Dendritic cell treated with granulocyte-macrophage colony-stimulating factor and Interleukin-4, amounts not matched to agents 40 ng/mL and 50 ng/mL, for 4 days (primary cell): ENCODE measurements at regions of chr12 and their contacts with region 1.

Region 1: GRCh38 chr12:49866859-49867579 is 24.1 kb upstream of the BCDIN3D start:
- H3K4me3 Mint-ChIP-seq: no peak overlapping the region
- H3K27ac Mint-ChIP-seq: no peak overlapping the region
- H3K4me1 Mint-ChIP-seq: no peaks in the 10 kb centered on the region
- H3K27me3 Mint-ChIP-seq: peaks cover 39% of the 10 kb centered on the region

Region 2: DNA sequence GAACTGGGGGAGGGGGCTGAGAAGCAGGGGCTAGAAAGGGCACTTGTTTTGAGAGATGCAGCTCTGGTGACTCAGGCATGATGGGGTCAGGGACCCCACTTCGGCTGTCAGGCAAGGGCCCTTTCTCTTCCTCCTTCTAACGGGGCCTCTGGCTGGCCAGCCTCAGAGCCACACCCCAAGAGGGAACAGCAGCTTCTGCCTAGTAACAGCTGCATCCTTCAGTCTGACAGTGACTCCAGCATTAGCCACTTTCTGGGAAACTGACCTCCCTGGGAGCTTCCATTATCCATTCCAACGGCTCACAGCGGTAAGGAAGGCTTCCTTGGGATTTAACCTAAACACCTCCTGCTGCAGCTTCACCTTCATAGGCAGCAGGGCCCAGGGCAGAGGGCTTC is 41.7 kb before region 1 on chr12:
- intact Hi-C with region 1: no loop called
- H3K4me3 Mint-ChIP-seq: peak overlapping the region; percentile 85
- H3K27ac Mint-ChIP-seq: peak overlapping the region; percentile 100
- H3K4me1 Mint-ChIP-seq: peaks cover 85% of the 10 kb centered on the region
- H3K27me3 Mint-ChIP-seq: no peaks in the 10 kb centered on the region

Region 3: DNA sequence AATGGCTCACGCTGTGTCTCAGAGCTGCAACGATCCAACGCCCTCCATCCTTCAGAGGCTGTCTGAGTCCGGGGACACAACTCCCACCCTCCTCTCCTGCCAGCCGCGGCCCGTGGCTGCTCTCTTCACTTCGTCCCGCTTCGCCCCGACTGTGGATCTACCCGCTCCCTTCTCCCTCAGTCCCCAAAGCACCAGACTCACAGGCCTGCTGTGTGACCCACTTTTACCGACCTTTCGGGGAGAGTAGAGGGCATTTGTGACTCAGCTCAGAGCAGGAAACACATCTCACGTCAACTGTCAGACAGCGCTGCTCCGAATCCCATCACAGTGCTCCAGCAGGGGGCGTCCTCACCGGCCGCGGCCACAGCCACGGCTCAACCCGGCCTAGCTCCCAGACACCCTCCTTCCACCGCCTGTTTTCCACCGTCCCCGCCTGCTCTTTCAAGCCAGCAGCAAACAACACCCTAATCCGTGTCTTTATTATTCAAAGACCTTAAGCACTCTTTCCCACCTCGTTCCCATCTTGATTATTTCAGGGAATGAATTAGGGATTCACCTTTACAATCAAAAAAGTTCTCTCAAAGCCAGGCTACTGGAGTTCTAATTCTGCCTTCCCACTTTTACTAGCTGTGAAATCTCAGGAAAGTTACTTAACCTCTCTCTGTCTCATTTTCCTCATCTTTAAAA is 78.5 kb after region 1 on chr12:
- intact Hi-C with region 1: loop called (anchors 5 kb)
- H3K4me3 Mint-ChIP-seq: peak overlapping the region; percentile 62
- H3K27ac Mint-ChIP-seq: peak overlapping the region; percentile 19
- H3K4me1 Mint-ChIP-seq: peaks cover 34% of the 10 kb centered on the region
- H3K27me3 Mint-ChIP-seq: peaks cover 71% of the 10 kb centered on the region